ENCODE measurements at regions of chr12 and their contacts with region 1.

Region 1: DNA sequence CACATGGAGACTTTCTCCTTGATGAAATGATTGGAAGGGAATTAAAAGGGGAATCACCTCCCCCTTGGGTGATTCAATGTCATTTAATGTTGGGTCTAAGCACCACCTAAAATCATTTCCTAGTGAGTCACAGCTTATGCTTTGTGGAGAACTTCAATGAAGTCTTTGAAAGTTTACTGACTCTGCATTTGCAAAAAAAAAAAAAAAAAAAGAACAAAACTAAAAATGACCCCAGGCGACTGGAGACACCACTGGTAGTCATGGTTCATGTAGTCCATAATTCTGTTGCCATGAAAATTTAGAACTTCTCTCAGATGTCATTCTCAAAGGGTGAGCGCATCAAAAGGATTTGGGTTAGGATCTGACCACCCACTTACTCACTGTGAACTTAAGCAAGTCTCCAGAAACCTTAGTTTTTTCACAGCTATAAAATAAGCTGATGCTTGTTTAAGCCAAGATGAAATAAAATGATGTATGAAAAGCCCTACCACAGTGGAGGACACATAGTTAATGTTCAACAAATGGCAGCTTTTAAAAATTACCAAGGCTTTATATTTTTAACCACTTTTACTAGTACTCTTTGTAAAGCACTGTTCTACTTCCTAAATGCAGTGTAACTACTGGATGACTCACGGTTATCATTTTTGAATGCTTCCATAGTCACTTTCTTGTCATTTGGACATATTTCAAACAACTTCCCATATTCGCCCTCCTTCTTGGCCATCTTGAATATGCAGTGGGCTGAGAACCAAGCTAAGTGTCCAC is 18.1 kb upstream of the KSR2 start:
- DNase-seq: peak; percentile 3 to 89
- H3K4me3 ChIP-seq: peak overlapping the region; percentile 26; the same call in 1 of the 2 replicates
- H3K27ac ChIP-seq: peak overlapping the region; percentile 82
- H3K4me1 ChIP-seq: peaks cover 21% of the 10 kb centered on the region
- H3K27me3 ChIP-seq: no peaks in the 10 kb centered on the region
- CTCF ChIP-seq: no peak

Region 2: GRCh38 chr12:116194935-116195431 is 1791.9 kb before region 1 on chr12:
- CTCF ChIA-PET with region 1: no interaction called
- POLR2A ChIA-PET with region 1: no interaction called
- intact Hi-C with region 1: no loop called
- DNase-seq: no peak
- H3K4me3 ChIP-seq: no peak overlapping the region
- H3K27ac ChIP-seq: no peak overlapping the region; the same call in 1 of the 2 replicates
- H3K4me1 ChIP-seq: no peaks in the 10 kb centered on the region
- H3K27me3 ChIP-seq: no peaks in the 10 kb centered on the region
- CTCF ChIP-seq: no peak

Region 3: GRCh38 chr12:116559162-116559935 is 1427.5 kb before region 1 on chr12 and contains the start of gene MAP1LC3B2:
- CTCF ChIA-PET with region 1: no interaction called
- POLR2A ChIA-PET with region 1: interaction called, 46 read pairs
- intact Hi-C with region 1: no loop called
- DNase-seq: peak; percentile 88 to 95
- H3K4me3 ChIP-seq: peak within 1 kb of the TSS; percentile 18; the same call in 1 of the 2 replicates
- H3K27ac ChIP-seq: peak within 1 kb of the TSS; percentile 87
- H3K4me1 ChIP-seq: peaks cover 23% of the 10 kb centered on the region
- H3K27me3 ChIP-seq: no peaks in the 10 kb centered on the region
- CTCF ChIP-seq: no peak
- total RNA-seq, gene MAP1LC3B2: 1.1 and 1.4 TPM in 2 replicates

Region 4: DNA sequence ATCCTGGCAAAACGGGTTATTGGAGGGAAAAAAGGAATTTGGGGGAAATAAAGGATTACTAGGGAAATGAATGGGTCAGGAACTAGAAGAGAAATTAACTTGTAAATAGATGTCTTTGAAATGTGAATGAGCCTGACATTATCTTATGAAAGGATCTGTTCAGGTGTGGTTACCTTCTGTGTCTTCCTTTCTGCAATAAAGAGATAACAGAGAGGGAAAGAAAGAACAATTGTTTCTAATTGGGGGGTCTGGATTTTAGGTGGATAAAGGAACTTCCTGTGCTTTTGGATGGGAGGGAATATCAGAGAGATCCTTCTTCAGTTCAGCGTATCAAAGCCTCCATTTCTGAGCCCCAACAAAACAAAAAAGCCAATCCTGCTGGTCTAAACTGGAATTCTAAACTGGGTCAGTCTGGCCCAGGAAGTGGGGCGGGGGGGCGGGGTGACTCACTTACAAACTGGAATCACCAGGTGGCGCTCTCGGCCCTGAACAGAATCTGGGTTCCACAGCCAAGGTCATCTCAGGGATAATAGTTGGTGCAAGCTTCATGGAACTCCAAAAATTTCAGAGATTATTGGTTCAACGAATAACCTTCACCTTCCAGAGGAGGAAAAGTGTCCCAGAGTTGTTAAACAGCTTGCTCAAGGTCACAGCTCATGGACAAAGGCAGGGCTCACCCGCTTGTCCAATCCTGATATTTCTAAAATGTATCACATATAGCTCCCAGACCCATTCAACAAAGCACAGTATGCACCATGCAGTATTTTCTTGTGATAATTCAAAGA is 133.9 kb after region 1 on chr12:
- CTCF ChIA-PET with region 1: no interaction called
- POLR2A ChIA-PET with region 1: no interaction called
- intact Hi-C with region 1: no loop called
- DNase-seq: peak in 1 of 2 experiments; percentile 51
- H3K4me3 ChIP-seq: no peak overlapping the region
- H3K27ac ChIP-seq: no peak overlapping the region
- H3K4me1 ChIP-seq: no peaks in the 10 kb centered on the region
- H3K27me3 ChIP-seq: no peaks in the 10 kb centered on the region
- CTCF ChIP-seq: peak; percentile 67

Region 5: DNA sequence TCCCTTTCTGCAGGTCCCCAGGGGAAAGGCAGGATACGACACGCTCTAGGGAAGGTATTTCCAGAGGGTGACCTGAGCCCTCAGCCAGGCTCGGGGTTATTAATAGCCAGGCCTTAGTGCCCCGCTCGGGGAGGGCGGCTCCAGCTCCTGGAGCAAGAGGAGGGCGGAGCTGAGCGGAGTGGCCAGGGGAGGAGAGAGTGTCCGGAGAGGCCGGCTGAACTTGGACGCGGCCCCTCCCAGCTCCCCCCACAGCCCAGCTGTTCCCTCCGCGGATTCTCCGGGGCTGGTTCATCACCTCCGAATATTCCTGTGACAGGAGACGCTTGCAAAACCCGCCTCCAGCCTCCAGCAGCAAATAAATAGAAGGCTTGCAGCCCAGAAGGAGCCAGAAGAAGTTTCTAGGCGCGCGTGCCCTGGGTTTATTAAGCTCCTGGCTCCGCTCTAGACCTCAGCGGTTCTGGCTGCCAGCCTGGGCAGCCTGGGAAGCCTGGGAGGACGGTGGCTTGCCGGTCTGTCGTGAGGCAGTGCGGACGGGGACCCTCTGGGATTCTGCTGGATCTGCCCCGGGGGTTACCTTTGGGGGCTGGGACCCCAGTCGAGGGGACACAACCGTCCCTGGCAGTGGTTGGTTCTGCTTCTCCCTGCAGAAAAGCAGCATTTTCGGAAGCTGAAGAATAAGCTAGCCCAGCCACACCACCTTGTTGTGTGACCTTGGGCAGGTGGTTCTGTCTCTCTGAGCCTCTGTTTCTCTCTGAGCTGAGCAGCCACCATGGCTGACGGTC is 1191.8 kb after region 1 on chr12 and contains the start of gene HSPB8:
- CTCF ChIA-PET with region 1: no interaction called
- POLR2A ChIA-PET with region 1: interaction called, 27 read pairs
- intact Hi-C with region 1: no loop called
- DNase-seq: peak; percentile 76 to 88
- H3K4me3 ChIP-seq: peak within 1 kb of the TSS; percentile 51
- H3K27ac ChIP-seq: peak within 1 kb of the TSS; percentile 73
- H3K4me1 ChIP-seq: peaks cover 37% of the 10 kb centered on the region
- H3K27me3 ChIP-seq: no peaks in the 10 kb centered on the region
- CTCF ChIP-seq: no peak
- total RNA-seq, gene HSPB8: 4.8 and 6.0 TPM in 2 replicates

Measured in PC-9 (cell line).